ENCODE measurements at regions of chr3 and their contacts with region 1.

Region 1: GRCh38 chr3:87733753-87734367 is 324.9 kb downstream of the CGGBP1 start:
- DNase-seq: no peak

Region 2: GRCh38 chr3:87674397-87675161 is 59.3 kb before region 1 on chr3:
- intact Hi-C with region 1: loop called (anchors 10 kb)
- DNase-seq: no peak

Region 3: GRCh38 chr3:87987952-87988351 is 254.1 kb after region 1 on chr3:
- intact Hi-C with region 1: no loop called
- DNase-seq: no peak

Region 4: DNA sequence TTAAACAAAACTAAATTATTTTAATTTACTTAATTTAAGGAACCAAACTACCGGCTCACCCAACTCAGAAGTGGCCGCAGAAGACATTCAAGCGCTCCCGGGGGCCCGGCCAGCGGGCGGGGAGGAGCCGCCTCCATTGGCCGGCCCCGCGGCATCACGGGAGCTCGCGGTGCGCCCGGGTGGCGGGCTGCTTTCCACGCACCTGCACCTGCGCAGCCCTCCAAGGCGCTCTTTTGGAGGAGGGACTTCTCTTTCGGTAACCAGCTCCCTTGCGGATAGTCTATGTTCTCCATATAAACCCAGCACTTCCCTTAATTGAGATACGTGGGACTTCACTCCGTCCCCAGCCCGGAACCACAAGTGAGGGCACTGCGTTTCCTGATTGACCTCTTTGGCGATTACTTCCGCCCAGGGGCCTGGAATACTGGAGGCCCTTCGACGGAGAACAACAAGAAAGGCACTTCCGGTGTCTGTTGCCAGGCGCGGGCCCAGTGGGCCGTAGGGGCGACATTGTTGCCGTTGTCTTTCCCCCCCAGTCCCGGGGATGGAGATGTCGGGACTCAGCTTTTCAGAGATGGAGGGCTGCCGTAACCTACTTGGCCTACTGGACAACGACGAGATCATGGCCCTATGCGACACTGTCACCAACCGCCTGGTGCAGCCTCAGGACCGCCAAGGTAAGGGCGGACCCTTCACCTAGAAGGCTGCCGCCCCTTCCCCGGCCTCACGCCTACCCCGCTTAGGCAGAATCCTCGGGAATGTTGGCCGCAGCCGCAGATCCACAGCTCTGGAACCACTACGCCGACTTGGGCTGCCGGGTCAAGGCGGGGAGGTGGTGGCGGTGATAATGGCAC is 415.9 kb after region 1 on chr3 and contains the start of gene C3orf38:
- intact Hi-C with region 1: no loop called
- DNase-seq: peak; percentile 92
- total RNA-seq, gene C3orf38: 15.6 TPM

Region 5: DNA sequence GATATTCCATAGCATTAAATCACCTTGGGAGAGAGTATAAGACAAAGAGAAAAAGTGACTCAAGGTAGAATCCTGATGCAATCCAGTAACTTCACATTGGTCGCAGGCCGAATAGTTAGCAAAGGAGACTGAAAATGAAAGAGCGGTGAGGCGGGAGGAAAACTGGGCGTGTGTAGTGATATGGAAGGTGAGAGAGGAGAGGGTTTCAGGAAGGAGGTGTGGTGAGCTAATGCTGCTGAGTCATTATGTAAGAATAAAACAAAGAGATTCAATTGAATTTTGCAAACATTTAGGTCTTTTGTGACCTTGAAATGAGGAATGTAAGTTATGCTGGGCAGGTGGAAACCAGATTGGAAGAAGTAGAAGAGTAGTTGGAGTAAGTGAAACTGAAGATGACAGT is 651.2 kb after region 1 on chr3:
- intact Hi-C with region 1: no loop called
- DNase-seq: no peak

Measured in cardiac septum (tissue), 1 donor.